ENCODE measurements at regions of chr5 and their contacts with region 1.

Region 1: DNA sequence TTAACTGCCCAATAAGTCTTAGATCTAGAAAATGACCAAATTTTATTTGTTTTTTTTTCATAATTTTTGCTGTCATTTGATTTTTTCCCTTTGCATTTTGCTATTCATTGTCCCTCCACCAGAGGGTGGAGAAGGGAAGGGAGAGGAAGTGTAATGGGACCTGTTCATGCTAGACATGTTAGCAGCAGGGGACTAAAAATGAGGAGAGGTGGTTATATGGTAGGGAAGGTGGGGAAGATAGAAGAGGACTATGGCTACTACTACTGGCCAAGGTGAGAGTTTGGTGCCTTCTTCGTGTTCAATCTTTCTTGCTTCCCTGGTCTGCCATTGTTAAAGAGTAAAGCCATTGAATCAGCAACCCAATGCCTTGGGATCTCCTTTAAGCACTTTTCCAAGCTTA is 6.4 kb downstream of the GRIA1 start:
- DNase-seq: no peak
- H3K4me3 ChIP-seq: no peak overlapping the region
- H3K27ac ChIP-seq: no peak overlapping the region
- H3K27me3 ChIP-seq: no peaks in the 10 kb centered on the region
- CTCF ChIP-seq: peak; percentile 95

Region 2: GRCh38 chr5:153573326-153574033 is 76.6 kb after region 1 on chr5:
- CTCF ChIA-PET with region 1: no interaction called
- POLR2A ChIA-PET with region 1: no interaction called
- DNase-seq: no peak
- H3K4me3 ChIP-seq: no peak overlapping the region
- H3K27ac ChIP-seq: no peak overlapping the region
- H3K27me3 ChIP-seq: no peaks in the 10 kb centered on the region
- CTCF ChIP-seq: no peak

Region 3: DNA sequence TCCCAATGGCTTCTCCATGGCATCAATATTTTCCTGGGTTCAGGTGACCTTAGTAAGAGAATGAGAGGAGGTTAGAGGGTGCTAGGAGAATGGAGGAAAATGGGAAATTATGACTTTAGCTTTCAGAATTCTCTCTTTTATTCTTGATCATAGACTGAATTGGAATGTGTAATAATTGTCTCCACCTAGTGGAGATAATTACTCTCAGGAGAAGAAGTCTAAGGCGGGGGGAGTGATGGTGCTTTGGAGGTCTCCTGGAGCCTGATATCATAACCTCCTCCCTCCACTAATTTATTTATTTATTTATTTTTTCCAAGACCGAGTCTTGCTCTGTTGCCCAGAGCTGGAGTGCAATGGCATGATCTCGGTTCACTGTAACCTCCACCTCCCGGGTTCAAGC is 214.9 kb after region 1 on chr5:
- CTCF ChIA-PET with region 1: interaction called, 77 read pairs
- POLR2A ChIA-PET with region 1: no interaction called
- DNase-seq: no peak
- H3K4me3 ChIP-seq: no peak overlapping the region
- H3K27ac ChIP-seq: no peak overlapping the region
- H3K27me3 ChIP-seq: no peaks in the 10 kb centered on the region
- CTCF ChIP-seq: 0 out of 2 replicates have a peak, but pooled peaks have one; percentile 29

Region 4: DNA sequence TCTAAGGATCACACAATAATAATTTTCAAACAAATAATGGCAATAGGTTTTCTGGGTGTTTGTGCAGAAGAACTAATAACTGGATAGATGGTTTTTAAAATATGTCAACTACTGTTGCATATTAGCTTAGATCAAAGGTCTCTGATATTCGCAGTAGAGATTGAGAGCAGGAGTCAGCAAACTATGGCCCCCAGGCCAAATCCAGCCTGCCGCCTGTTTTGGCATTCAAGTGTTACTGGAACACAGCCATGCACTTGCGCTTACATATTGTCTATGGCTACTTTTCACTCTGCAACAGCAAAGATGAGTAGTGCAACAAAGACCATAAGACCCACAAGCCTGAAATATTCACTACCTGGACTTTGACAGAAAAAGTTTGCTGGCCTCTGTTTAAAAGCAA is 254.4 kb after region 1 on chr5:
- CTCF ChIA-PET with region 1: no interaction called
- POLR2A ChIA-PET with region 1: no interaction called
- DNase-seq: no peak
- H3K4me3 ChIP-seq: no peak overlapping the region
- H3K27ac ChIP-seq: no peak overlapping the region
- H3K27me3 ChIP-seq: no peaks in the 10 kb centered on the region
- CTCF ChIP-seq: no peak